ENCODE measurements at regions of chr16 and their contacts with region 1.

Region 1: GRCh38 chr16:30984669-30985400 is at the start of gene HSD3B7:
- DNase-seq: peak; percentile 91
- H3K4me3 ChIP-seq: peak within 1 kb of the TSS in 1 of 2 donors; percentile 14
- H3K27ac ChIP-seq: peak within 1 kb of the TSS in 1 of 2 donors; percentile 44
- H3K4me1 ChIP-seq: peaks cover 11% of the 10 kb centered on the region
- H3K27me3 ChIP-seq: no peaks in the 10 kb centered on the region
- CTCF ChIP-seq: peak; percentile 92 to 99 (median 94)
- POLR2A ChIP-seq: no peak
- total RNA-seq, gene HSD3B7: 5.7 to 7.4 TPM

Region 2: GRCh38 chr16:31032736-31033708 is 48.2 kb after region 1 on chr16 and contains the start of gene STX4:
- intact Hi-C with region 1: loop called (anchors 10 kb)
- DNase-seq: peak; percentile 99
- H3K4me3 ChIP-seq: peak within 1 kb of the TSS; percentile 85 to 90
- H3K27ac ChIP-seq: peak within 1 kb of the TSS; percentile 91 to 94
- H3K4me1 ChIP-seq: peaks cover 8% of the 10 kb centered on the region
- H3K27me3 ChIP-seq: no peaks in the 10 kb centered on the region
- CTCF ChIP-seq: peak in 2 of 3 experiments; percentile 14 to 17
- POLR2A ChIP-seq: no peak
- total RNA-seq, gene STX4: 50.9 to 56.9 TPM

Region 3: DNA sequence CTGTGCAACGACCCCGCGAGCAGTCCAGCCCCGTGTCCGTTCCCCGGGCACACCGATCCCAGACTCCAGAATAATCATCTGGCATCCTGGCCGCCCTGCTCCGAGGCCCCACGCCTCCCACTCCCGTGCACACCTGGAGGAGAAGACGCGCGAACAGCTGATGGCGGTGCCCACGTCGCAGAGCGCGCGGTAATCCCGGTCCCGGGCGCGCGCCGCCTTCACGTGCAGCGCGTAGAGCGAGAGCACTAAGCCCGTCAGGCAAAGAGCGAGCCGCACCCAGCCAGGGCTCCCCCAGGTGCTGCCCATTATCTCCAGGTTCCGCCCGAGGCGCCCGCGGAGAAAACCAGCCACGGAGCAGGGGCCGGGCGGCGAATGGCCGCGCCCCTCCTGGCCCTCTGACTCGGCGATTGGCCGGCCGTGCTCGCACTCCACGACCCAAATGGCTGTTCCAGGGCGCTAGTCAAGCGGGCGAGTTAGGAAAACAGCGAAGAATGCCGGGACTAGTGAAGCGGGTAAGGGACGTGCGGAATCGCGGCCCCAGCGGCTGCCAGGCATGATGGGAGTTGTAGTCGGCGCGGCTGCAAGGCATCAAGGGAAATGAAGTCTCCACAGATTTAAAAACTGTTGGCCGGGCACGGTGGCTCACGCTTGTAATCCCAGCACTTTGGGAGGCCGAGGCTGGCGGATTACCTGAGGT is 109.7 kb after region 1 on chr16 and contains the start of gene VKORC1:
- intact Hi-C with region 1: loop called (anchors 5 kb)
- DNase-seq: peak; percentile 97
- H3K4me3 ChIP-seq: peak within 1 kb of the TSS; percentile 80 to 87
- H3K27ac ChIP-seq: peak within 1 kb of the TSS; percentile 82
- H3K4me1 ChIP-seq: peaks cover 6% of the 10 kb centered on the region
- H3K27me3 ChIP-seq: no peaks in the 10 kb centered on the region
- CTCF ChIP-seq: peak in 2 of 3 experiments; percentile 12 to 21
- POLR2A ChIP-seq: no peak
- total RNA-seq, gene VKORC1: 102 to 183 TPM

Region 4: GRCh38 chr16:31142109-31143010 is 157.5 kb after region 1 on chr16:
- intact Hi-C with region 1: loop called (anchors 10 kb)
- DNase-seq: peak; percentile 99
- H3K4me3 ChIP-seq: peak overlapping the region; percentile 51 to 52
- H3K27ac ChIP-seq: peak overlapping the region; percentile 35 to 81
- H3K4me1 ChIP-seq: peaks cover 10% of the 10 kb centered on the region
- H3K27me3 ChIP-seq: no peaks in the 10 kb centered on the region
- CTCF ChIP-seq: peak; percentile 97 to 99 (median 99)
- POLR2A ChIP-seq: no peak

Region 5: GRCh38 chr16:31430380-31431052 is 445.7 kb after region 1 on chr16:
- intact Hi-C with region 1: loop called (anchors 10 kb)
- DNase-seq: no peak
- H3K4me3 ChIP-seq: no peak overlapping the region
- H3K27ac ChIP-seq: peak overlapping the region; percentile 8 to 62
- H3K4me1 ChIP-seq: peaks cover 21% of the 10 kb centered on the region
- H3K27me3 ChIP-seq: no peaks in the 10 kb centered on the region
- CTCF ChIP-seq: no peak
- POLR2A ChIP-seq: no peak